Activated CD8-positive, alpha-beta T cell treated with anti-CD3 and anti-CD28 coated beads, Interleukin-2, amount 10 ng/mL, durations not matched to agents 7 days and 5 days (primary cell): ENCODE measurements at regions of chr1 and their contacts with region 1.

Region 1: GRCh38 chr1:109773146-109773899 is 9.6 kb upstream of the EPS8L3 start:
- DNase-seq: peak; percentile 85
- ATAC-seq: peak; percentile 90
- H3K4me3 Mint-ChIP-seq: no peak overlapping the region
- H3K27ac Mint-ChIP-seq: no peak overlapping the region
- H3K4me1 Mint-ChIP-seq: peaks cover 27% of the 10 kb centered on the region
- H3K27me3 Mint-ChIP-seq: peaks cover 10% of the 10 kb centered on the region

Region 2: DNA sequence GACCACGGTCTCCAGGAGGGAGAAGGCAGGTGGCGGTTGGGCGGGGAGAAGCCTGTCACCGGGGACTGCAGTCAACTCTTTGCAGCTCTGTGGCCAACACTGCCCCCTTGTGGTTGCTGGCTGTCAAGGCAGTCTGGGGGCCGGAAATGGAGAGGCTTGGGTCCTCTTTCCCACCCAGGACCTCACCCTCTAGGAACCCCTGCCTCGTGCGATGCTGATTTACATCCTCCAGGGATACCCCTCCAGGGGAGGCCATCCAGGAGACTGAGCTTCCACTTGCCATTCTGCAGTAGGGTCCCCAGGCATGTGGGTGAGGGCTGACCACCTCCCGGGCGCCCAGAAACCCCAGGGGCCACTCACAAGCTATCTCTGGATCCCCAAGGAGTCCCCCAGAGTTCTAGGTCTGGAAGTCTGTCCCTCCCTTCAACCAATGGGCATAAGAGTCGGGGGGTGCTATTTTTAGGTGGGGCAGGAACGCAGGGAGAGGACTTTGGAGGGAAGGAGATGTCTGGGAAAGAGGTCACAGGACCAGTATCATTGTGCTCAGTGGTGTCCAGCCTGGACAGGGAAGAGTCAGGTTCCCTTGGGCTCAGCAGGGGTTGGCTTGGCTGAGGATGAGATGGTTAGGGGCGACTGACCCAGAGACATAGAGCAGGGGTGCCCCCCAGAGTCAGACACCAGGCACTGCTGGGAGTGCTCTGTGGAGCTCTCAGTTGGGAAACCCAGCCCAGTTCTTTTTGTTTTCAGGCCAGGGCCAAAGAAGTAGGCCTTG is 240.8 kb before region 1 on chr1:
- CTCF ChIA-PET with region 1: interaction called, 12 read pairs
- POLR2A ChIA-PET with region 1: no interaction called
- DNase-seq: peak; percentile 94
- ATAC-seq: peak; percentile 88
- H3K4me3 Mint-ChIP-seq: peak overlapping the region; percentile 53
- H3K27ac Mint-ChIP-seq: peak overlapping the region; percentile 96
- H3K4me1 Mint-ChIP-seq: peaks cover 36% of the 10 kb centered on the region
- H3K27me3 Mint-ChIP-seq: no peaks in the 10 kb centered on the region

Region 3: DNA sequence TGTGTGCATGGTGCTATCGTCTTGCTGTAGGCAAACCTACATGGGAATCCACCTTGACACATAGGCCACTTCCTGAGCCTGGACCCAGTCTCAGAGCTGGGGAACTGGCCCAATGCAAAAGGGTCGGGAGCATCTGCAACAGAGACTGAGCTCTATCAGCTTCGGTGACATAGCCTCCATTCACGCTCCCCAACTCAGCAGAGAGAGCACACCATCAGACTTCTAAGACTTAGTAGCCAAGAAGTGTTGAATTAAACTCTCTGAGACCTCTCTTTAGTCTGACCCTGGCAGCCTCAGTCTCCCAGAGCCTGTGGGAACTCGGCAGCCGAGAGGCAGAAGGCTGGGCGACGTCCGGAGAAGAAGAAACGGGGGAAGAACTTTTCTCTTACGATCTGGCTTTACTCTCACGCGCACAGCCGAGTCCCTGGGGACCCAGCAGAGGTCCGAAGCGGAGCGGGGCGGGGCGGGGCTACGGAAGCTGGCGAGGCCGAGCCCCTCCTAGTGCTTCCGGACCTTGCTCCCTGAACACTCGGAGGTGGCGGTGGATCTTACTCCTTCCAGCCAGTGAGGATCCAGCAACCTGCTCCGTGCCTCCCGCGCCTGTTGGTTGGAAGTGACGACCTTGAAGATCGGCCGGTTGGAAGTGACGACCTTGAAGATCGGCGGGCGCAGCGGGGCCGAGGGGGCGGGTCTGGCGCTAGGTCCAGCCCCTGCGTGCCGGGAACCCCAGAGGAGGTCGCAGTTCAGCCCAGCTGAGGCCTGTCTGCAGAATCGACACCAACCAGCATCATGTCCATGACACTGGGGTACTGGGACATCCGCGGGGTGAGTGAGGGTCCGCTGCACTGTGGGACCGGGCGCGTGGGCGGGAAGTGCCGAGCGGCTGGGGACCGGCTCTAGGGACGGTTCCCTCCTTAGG is 117.5 kb before region 1 on chr1 and contains the start of gene GSTM4:
- CTCF ChIA-PET with region 1: interaction called, 76 read pairs
- POLR2A ChIA-PET with region 1: no interaction called
- DNase-seq: peak; percentile 77
- ATAC-seq: peak; percentile 97
- H3K4me3 Mint-ChIP-seq: peak within 1 kb of the TSS; percentile 82
- H3K27ac Mint-ChIP-seq: peak within 1 kb of the TSS; percentile 87
- H3K4me1 Mint-ChIP-seq: peaks cover 17% of the 10 kb centered on the region
- H3K27me3 Mint-ChIP-seq: peaks cover 29% of the 10 kb centered on the region
- total RNA-seq, gene GSTM4: 17.0 to 18.5 TPM

Region 4: GRCh38 chr1:109802901-109803561 is 29.7 kb after region 1 on chr1:
- CTCF ChIA-PET with region 1: interaction called, 21 read pairs
- POLR2A ChIA-PET with region 1: no interaction called
- DNase-seq: no peak
- ATAC-seq: peak; percentile 2
- H3K4me3 Mint-ChIP-seq: peak overlapping the region; percentile 63
- H3K27ac Mint-ChIP-seq: peak overlapping the region; percentile 95
- H3K4me1 Mint-ChIP-seq: peaks cover 90% of the 10 kb centered on the region
- H3K27me3 Mint-ChIP-seq: no peaks in the 10 kb centered on the region

Region 5: DNA sequence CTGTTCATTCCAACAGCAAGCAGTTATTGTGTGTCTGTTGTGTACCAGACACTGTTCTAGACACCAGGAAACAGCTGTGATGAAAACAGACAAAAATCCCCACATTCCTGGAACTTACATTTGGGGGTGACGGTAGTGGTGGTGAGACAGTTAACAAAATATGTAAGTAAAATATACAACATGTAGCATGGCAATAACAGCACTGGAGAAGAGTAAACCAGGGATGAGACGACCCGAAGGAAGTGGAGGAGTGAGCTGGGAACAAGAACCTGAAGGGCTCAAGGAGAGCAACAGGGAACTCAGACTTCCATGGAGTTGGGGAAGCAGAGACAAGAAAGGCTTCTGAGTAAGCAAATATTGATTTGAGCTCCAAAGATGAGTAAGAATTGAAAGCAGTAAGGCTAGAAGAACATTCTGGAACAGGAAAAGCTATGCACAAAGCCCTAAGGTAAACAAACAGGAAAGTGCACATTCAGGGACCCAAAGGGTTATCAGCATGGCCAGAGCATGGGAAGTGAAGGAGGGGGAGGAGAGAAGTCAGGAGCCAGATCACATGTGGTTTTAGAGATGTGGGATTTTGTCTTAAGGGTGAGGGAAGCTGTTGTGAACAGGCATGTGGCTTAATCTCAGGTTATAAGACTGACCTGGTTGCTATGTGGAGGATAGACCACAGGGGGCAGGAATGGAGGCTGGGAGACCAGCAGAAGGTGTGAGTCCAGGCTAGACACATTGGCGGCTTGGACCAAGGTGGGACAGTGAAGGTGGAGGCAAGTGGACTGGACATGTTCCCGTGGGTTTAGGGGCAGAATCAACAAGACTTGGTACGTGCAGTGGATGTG is 144.7 kb after region 1 on chr1:
- CTCF ChIA-PET with region 1: interaction called, 17 read pairs
- POLR2A ChIA-PET with region 1: no interaction called
- DNase-seq: no peak
- ATAC-seq: no peak
- H3K4me3 Mint-ChIP-seq: no peak overlapping the region
- H3K27ac Mint-ChIP-seq: peak overlapping the region; percentile 53
- H3K4me1 Mint-ChIP-seq: peaks cover 69% of the 10 kb centered on the region
- H3K27me3 Mint-ChIP-seq: no peaks in the 10 kb centered on the region

Region 6: GRCh38 chr1:110005971-110006370 is 232.6 kb after region 1 on chr1:
- CTCF ChIA-PET with region 1: interaction called, 66 read pairs
- POLR2A ChIA-PET with region 1: no interaction called
- DNase-seq: no peak
- ATAC-seq: no peak
- H3K4me3 Mint-ChIP-seq: no peak overlapping the region
- H3K27ac Mint-ChIP-seq: no peak overlapping the region
- H3K4me1 Mint-ChIP-seq: peaks cover 17% of the 10 kb centered on the region
- H3K27me3 Mint-ChIP-seq: no peaks in the 10 kb centered on the region